ENCODE measurements at regions of chr14 and their contacts with region 1.

Region 1: GRCh38 chr14:26598081-26598795 is 405 bp upstream of the NOVA1 start:
- DNase-seq: peak in 1 of 2 donors; percentile 88
- H3K4me3 ChIP-seq: peak overlapping the region; percentile 64 to 71
- H3K27ac ChIP-seq: peak overlapping the region; percentile 76 to 85
- H3K4me1 ChIP-seq: no peaks in the 10 kb centered on the region
- H3K27me3 ChIP-seq: no peaks in the 10 kb centered on the region
- CTCF ChIP-seq: no peak

Region 2: DNA sequence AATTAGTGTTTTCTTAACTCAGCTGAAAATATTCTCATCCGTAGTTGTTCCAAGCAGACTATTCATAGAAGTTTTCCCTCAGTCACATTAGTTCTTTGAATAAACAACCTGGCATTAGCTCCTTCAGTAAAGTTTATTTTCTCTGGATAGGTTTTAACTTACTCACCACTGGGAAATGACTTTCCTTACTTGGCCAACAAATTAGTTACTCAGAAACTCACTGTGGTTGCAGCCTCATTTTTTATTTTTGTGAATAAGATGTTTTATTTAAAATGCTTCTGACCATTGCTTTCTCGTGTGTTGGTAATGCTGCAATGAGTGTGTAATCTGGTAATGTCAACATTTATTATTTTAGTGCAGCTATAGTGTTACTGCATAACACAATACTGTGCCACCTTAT is 75.3 kb before region 1 on chr14:
- intact Hi-C with region 1: loop called (anchors 2 kb)
- DNase-seq: no peak
- H3K4me3 ChIP-seq: no peak overlapping the region
- H3K27ac ChIP-seq: peak overlapping the region in 1 of 2 donors; percentile 40
- H3K4me1 ChIP-seq: no peaks in the 10 kb centered on the region
- H3K27me3 ChIP-seq: no peaks in the 10 kb centered on the region
- CTCF ChIP-seq: no peak

Region 3: DNA sequence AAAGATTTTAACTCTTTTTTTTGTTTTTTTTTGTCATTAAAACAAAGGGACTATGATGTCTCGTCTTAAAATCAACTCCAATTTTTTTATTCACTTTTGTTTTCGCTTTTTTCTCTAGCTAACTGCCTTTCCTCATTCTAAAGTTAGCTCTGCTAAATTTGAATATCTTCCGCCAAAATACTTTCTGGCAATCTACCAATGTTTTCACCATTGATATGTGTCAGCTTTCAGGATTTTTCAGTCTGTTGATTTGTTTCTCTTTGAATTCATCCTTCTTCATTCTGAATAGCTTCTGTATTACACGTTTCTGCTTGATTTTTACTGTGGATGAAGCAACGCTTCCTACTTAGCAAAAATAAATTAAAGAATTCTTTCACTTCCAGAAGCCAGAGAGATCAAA is 38.3 kb after region 1 on chr14:
- intact Hi-C with region 1: no loop called
- DNase-seq: no peak
- H3K4me3 ChIP-seq: no peak overlapping the region
- H3K27ac ChIP-seq: no peak overlapping the region
- H3K4me1 ChIP-seq: no peaks in the 10 kb centered on the region
- H3K27me3 ChIP-seq: no peaks in the 10 kb centered on the region
- CTCF ChIP-seq: no peak

Region 4: DNA sequence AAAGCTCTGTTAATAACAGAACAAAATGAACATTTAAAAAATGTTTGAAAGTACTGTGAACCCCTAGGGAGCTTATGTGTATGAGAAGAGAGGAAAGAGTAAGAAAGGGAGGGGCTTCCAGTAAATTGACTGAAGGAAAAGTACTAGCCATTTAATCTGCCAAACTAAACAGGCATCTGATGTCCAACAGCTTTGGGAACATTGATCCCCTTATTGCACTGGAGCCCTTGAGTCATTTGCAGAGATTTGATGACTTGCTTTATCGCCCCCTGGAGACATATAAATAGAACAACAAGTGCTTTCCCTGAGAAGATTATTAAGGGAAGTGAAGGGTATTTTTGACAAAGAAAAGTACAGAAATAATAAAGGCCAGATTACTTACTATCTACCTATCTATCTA is 318.8 kb after region 1 on chr14:
- intact Hi-C with region 1: loop called (anchors 5 kb)
- DNase-seq: no peak
- H3K4me3 ChIP-seq: no peak overlapping the region
- H3K27ac ChIP-seq: no peak overlapping the region
- H3K4me1 ChIP-seq: no peaks in the 10 kb centered on the region
- H3K27me3 ChIP-seq: no peaks in the 10 kb centered on the region
- CTCF ChIP-seq: peak in 1 of 3 experiments; percentile 12